Activated CD4-positive, alpha-beta T cell treated with anti-CD3 and anti-CD28 coated beads for 36 hours (primary cell): ENCODE measurements at regions of chr12 and their contacts with region 1.

Region 1: DNA sequence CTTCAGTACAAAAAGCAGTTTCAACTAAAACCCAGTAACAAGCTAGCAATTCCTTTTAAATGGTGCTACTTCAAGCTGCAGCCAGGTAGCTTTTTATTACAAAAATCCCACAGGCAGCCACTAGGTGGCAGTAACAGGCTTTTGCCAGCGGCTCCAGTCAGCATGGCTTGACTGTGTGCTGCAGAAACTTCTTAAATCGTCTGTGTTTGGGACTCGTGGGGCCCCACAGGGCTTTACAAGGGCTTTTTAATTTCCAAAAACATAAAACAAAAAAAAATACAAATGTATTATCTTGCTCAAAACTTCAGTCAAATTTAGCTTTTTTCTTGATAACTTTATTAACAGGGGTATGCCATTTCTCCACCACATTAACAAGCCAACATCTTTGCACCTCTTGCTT is 3.6 kb upstream of the CLEC4E start:
- DNase-seq: peak; percentile 83
- ATAC-seq: peak; percentile 73
- H3K4me3 Mint-ChIP-seq: no peak overlapping the region
- H3K27ac Mint-ChIP-seq: no peak overlapping the region
- H3K4me1 Mint-ChIP-seq: peaks cover 3% of the 10 kb centered on the region
- H3K27me3 Mint-ChIP-seq: peaks cover 22% of the 10 kb centered on the region

Region 2: DNA sequence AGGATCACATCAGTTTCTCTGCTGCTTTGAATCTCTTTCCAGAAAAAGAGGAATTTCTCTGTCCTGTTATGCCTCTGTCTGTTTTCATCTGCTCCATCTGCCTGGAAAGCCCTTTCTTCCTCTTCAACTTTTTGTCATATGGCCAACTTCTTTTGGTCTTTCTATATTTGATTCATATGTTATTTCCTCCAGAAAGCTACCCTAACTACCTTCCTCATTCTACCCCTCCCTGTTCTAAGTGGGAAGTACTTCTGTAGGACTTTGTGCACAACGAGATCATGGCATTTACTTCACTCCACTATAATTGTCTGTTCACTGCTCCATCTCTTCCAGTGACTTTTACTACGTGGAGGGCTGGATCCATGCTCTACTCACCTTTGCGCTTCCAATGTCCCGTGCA is 25.1 kb before region 1 on chr12:
- CTCF ChIA-PET with region 1: interaction called, 19 read pairs
- POLR2A ChIA-PET with region 1: no interaction called
- intact Hi-C with region 1: no loop called
- DNase-seq: no peak
- ATAC-seq: no peak
- H3K4me3 Mint-ChIP-seq: no peak overlapping the region
- H3K27ac Mint-ChIP-seq: no peak overlapping the region
- H3K4me1 Mint-ChIP-seq: no peaks in the 10 kb centered on the region
- H3K27me3 Mint-ChIP-seq: peaks cover 32% of the 10 kb centered on the region

Region 3: GRCh38 chr12:8554451-8555195 is 10.3 kb after region 1 on chr12:
- CTCF ChIA-PET with region 1: interaction called, 24 read pairs
- POLR2A ChIA-PET with region 1: no interaction called
- intact Hi-C with region 1: no loop called
- DNase-seq: no peak
- ATAC-seq: no peak
- H3K4me3 Mint-ChIP-seq: no peak overlapping the region
- H3K27ac Mint-ChIP-seq: no peak overlapping the region
- H3K4me1 Mint-ChIP-seq: peaks cover 3% of the 10 kb centered on the region
- H3K27me3 Mint-ChIP-seq: peaks cover 3% of the 10 kb centered on the region

Region 4: DNA sequence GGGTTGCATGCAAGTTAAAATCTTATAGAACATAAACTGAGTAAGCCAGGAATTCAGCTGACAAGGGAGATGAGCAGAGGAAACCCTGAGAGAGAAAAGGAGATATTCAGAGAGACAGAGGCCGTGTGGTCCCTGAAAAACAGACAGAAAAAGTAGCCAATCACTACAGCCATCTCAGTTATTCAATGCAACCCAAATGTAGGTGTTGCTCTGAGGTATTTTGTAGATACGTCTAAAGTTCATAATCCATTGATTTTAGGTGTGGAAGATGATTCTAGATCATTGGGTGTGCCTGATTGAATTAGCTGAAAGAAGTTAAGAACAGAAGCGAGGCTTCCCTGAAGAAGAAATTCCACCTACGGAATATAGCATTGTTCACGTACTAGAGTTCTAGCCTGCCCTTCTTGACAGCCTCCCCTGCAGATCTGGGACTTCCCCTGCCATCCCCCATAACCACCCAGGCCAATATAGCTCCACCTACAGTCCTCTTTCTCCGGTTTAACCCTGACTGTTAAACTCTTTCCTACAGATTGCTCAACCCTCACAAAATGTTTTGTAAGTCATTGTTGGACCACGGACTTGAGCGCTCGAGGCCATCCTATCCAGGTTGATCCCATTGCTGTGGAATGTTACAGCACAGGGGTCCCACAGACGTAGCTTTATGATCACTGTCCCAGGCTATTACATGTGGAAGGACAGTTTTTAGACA is 46.7 kb after region 1 on chr12:
- CTCF ChIA-PET with region 1: interaction called, 14 read pairs
- POLR2A ChIA-PET with region 1: no interaction called
- intact Hi-C with region 1: no loop called
- DNase-seq: peak; percentile 7
- ATAC-seq: peak; percentile 58
- H3K4me3 Mint-ChIP-seq: no peak overlapping the region
- H3K27ac Mint-ChIP-seq: no peak overlapping the region
- H3K4me1 Mint-ChIP-seq: peaks cover 8% of the 10 kb centered on the region
- H3K27me3 Mint-ChIP-seq: no peaks in the 10 kb centered on the region

Region 5: DNA sequence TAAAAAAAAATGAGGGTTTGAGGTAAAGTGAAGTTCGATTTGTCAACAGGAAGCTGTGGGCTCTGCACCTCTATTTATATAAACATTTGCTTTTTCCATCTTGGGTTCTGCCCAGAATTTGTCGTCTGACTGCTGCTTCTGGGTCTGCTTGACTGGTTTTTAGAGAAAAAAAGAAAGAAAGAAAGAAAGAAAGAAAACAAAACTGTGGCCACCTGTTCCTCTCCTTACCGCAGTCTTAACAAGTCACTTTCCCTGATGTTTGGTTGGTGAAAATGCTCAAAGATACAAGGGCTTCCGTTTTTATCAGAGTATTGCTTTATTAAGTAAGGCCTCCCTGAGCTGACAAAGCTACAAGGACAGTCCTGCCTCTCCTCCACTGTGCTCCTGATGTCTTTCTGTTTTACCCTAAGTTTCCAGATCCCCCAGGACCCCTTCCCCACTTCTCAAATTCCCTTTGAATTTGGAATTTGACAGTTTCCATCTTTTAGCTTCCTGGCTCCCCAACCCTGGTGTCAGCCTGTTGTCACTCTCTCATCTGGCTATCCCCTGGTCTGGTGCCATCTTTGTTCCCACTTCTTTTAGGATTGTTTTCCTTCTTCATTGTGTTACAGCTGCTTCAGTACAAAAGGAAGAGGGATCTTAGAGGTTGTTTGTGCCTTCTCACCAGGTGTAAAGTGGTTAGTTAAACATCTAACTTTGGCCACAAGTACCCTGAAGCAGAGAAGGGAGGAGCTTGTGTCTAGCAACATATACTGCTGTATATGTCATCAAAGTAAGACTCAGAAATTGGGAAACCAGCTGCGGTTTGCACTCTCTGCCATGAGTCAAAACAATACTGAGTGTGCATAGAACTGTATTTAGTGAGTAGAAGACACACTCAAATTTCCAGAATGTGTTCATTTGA is 100.3 kb after region 1 on chr12:
- CTCF ChIA-PET with region 1: interaction called, 6 read pairs
- POLR2A ChIA-PET with region 1: no interaction called
- intact Hi-C with region 1: loop called in 1 of 2 experiments (anchors 5 kb)
- DNase-seq: peak; percentile 80
- ATAC-seq: peak; percentile 89
- H3K4me3 Mint-ChIP-seq: peak overlapping the region; percentile 1
- H3K27ac Mint-ChIP-seq: peak overlapping the region; percentile 80
- H3K4me1 Mint-ChIP-seq: peaks cover 45% of the 10 kb centered on the region
- H3K27me3 Mint-ChIP-seq: peaks cover 6% of the 10 kb centered on the region

Region 6: GRCh38 chr12:8860165-8860961 is 316.1 kb after region 1 on chr12:
- CTCF ChIA-PET with region 1: interaction called, 12 read pairs
- POLR2A ChIA-PET with region 1: no interaction called
- intact Hi-C with region 1: loop called in 1 of 2 experiments (anchors 2 kb)
- DNase-seq: peak; percentile 51
- ATAC-seq: peak; percentile 71
- H3K4me3 Mint-ChIP-seq: no peak overlapping the region
- H3K27ac Mint-ChIP-seq: no peak overlapping the region
- H3K4me1 Mint-ChIP-seq: no peaks in the 10 kb centered on the region
- H3K27me3 Mint-ChIP-seq: no peaks in the 10 kb centered on the region